ENCODE measurements at regions of chr17 and their contacts with region 1.

Region 1: DNA sequence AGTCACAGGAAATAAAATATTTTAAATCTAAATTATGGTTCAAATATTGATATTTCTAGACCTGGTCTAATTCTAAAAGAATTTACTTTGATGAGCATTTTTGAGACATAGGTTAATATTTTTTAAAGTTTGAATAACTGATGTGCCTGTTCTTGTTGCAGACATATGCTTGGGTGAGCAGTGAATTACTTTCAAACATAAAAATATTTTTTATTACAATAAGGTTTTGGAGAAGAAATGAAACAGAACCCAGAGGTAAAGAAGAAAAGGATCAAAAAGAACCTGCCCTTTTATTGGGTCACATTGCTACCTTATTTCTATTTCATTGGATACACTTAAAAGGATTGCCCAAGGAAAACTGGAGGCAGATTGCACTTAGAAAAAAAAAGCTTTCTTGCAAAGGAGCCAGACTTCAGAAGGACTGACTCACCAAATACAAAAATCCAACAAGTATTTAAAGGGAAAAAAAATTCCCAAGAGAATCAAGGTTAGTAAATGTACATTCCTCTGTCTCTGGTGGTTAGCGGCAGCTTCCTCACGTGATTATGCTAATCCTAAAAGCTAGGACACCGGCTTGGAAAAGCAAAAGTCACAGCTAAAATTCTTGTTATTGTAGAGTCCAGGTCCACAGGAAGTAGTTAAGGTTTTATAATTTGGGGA is 18.5 kb downstream of the ENPP7 start:
- DNase-seq: no peak
- ATAC-seq: no peak
- H3K4me3 ChIP-seq: no peak overlapping the region
- H3K4me3 Mint-ChIP-seq: no peak overlapping the region
- H3K27ac ChIP-seq: no peak overlapping the region
- H3K27ac Mint-ChIP-seq: no peak overlapping the region
- H3K4me1 ChIP-seq: peaks cover 28% of the 10 kb centered on the region
- H3K4me1 Mint-ChIP-seq: peaks cover 19% of the 10 kb centered on the region
- H3K27me3 ChIP-seq: peaks cover 44 to 54% of the 10 kb centered on the region in 2 experiments
- H3K27me3 Mint-ChIP-seq: peaks cover 69% of the 10 kb centered on the region
- CTCF ChIP-seq: no peak

Region 2: DNA sequence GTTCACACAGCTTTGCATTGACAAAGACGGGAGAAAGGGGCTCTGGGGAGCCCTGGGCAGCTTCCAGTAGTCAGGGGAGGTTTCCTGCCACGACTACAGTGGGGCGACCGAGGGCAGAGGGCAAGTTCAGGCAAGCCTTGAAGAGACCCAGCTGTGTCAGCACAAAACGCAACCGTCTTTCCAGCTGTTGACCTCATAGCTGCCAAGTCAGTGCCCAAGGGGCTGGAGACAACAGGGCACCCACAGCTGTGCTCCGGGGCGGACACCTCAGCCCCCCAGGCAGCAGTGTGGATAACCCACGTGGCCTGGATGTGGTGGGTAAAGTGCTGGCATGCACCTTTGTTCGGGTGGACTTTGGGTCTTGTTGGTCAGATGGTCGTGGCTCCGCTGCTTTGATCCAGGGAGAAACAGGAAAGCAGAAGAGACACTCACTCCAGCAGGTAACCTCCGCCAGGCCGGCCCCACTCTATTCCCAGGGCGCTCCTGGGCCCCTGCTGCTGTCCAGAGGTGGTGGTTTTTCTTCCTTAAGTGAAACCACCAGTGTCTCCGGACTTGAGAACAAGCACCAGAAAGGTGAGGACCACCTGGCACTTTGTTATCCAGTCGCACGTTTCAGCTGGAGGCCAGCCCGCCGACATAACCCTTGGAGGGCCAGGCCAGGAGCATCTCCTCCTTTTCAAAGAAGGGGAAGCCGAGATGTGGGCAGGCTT is 11.1 kb after region 1 on chr17:
- CTCF ChIA-PET with region 1: no interaction called
- POLR2A ChIA-PET with region 1: no interaction called
- intact Hi-C with region 1: no loop called
- DNase-seq: no peak
- ATAC-seq: no peak
- H3K4me3 ChIP-seq: no peak overlapping the region
- H3K4me3 Mint-ChIP-seq: no peak overlapping the region
- H3K27ac ChIP-seq: no peak overlapping the region
- H3K27ac Mint-ChIP-seq: no peak overlapping the region
- H3K4me1 ChIP-seq: no peaks in the 10 kb centered on the region
- H3K4me1 Mint-ChIP-seq: no peaks in the 10 kb centered on the region
- H3K27me3 ChIP-seq: peaks cover 3 to 4% of the 10 kb centered on the region in 2 experiments
- H3K27me3 Mint-ChIP-seq: peaks cover 22% of the 10 kb centered on the region
- CTCF ChIP-seq: no peak

Region 3: DNA sequence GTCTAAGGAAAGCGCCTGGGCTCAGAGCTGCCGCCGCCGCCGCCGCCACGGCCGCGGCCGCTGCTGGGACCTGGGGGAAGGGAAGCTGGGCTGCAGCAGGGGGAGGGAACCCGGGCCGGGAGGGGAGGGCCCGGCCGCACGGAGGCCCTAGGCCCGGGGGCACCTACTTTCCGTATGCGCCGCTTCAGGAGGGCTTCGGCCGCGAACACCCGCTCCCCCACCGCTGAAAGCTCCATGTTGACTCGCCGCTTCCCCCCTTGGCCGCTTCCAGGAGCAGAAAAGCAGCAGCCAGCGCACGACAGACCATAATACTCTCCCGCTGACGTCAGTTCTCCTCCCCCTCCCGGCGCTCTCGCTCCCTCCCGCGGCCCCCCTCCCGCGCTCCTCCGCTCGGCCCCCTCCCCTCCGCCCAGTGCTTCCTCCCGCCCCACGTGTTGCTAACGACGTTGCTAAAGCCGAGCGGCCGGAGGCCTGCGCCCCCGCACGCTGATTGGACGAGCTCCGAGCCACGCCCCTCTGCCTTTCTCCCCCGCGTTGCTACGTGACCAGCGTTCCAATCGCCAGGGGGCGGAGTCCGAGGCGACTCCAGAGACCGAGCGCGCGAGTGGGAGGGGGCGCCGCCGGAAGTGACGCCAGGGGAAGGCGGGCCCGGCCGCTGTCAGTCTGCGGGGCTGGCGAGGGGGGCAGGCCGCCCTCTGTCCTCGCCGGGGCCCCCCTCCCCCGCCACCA is 47.6 kb after region 1 on chr17 and contains the start of gene CBX8:
- CTCF ChIA-PET with region 1: interaction called, 6 read pairs
- POLR2A ChIA-PET with region 1: interaction called, 5 read pairs
- intact Hi-C with region 1: loop called in 1 of 2 experiments (anchors 5 kb)
- DNase-seq: peak; percentile 97 to 100 (median 99)
- ATAC-seq: peak; percentile 80
- H3K4me3 ChIP-seq: peak within 1 kb of the TSS; percentile 69
- H3K4me3 Mint-ChIP-seq: peak within 1 kb of the TSS; percentile 93
- H3K27ac ChIP-seq: peak within 1 kb of the TSS in 1 of 2 donors; percentile 7
- H3K27ac Mint-ChIP-seq: peak within 1 kb of the TSS; percentile 80
- H3K4me1 ChIP-seq: peaks cover 62% of the 10 kb centered on the region
- H3K4me1 Mint-ChIP-seq: peaks cover 49% of the 10 kb centered on the region
- H3K27me3 ChIP-seq: peaks cover 50 to 58% of the 10 kb centered on the region in 2 experiments
- H3K27me3 Mint-ChIP-seq: peaks cover 50% of the 10 kb centered on the region
- CTCF ChIP-seq: no peak
- total RNA-seq, gene CBX8: 5.3 to 6.5 TPM

Region 4: DNA sequence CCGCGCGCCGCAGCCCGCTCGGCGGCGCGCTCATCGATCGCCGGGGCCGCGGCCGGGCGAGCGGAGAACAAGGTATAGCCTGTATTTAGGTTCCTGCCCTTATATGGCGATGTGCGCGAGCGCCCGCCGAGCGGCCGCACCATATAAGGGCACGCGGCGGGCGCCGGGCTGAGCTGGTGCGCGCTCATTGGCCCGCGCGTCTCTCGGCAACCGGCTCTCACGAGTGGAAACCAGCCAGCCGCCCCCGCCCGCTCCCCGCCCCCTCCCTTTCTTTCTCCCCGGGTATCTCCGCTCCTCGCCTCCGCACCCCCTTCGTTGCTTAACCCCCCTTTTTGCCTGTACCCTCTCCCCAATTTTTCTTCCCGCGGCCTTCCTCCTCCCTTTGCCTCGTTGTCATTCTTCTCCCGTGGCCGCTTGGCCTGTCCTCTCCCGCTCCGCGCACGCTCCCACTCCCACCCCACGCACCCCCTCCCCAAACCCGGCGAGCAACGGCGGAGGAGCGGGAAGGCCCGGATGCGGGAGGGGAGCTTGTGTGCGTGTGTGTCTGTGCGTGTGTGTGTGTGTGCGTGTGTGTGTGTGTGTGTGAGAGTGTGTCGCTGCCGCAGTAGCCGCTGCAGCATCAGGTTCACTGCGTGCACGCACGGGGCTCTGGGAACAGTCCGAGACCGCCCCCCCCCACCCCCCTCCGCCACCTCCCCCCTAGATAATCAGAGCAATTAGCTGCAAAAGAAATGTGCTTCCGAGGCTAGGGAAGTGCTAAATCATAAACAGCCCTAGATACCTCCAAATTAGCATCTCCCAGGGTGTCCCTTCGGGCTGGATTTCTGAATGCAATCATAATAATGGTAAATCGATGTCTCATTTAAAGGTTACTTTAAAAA is 61.1 kb after region 1 on chr17:
- CTCF ChIA-PET with region 1: interaction called, 13 read pairs
- POLR2A ChIA-PET with region 1: interaction called, 6 read pairs
- intact Hi-C with region 1: loop called in 1 of 2 experiments (anchors 5 kb)
- DNase-seq: peak; percentile 48 to 93 (median 74)
- ATAC-seq: peak; percentile 92
- H3K4me3 ChIP-seq: no peak overlapping the region
- H3K4me3 Mint-ChIP-seq: peak overlapping the region; percentile 62
- H3K27ac ChIP-seq: no peak overlapping the region
- H3K27ac Mint-ChIP-seq: no peak overlapping the region
- H3K4me1 ChIP-seq: peaks cover 65% of the 10 kb centered on the region
- H3K4me1 Mint-ChIP-seq: peaks cover 36% of the 10 kb centered on the region
- H3K27me3 ChIP-seq: peaks cover 81 to 83% of the 10 kb centered on the region in 2 experiments
- H3K27me3 Mint-ChIP-seq: peaks cover 77% of the 10 kb centered on the region
- CTCF ChIP-seq: no peak

Region 5: GRCh38 chr17:79866791-79867518 is 117.7 kb after region 1 on chr17:
- CTCF ChIA-PET with region 1: no interaction called
- POLR2A ChIA-PET with region 1: no interaction called
- intact Hi-C with region 1: no loop called
- DNase-seq: peak in 3 of 14 experiments; percentile 23 to 47 (median 24)
- ATAC-seq: peak; percentile 52
- H3K4me3 ChIP-seq: no peak overlapping the region
- H3K4me3 Mint-ChIP-seq: no peak overlapping the region
- H3K27ac ChIP-seq: no peak overlapping the region
- H3K27ac Mint-ChIP-seq: peak overlapping the region; percentile 39
- H3K4me1 ChIP-seq: peaks cover 8% of the 10 kb centered on the region
- H3K4me1 Mint-ChIP-seq: no peaks in the 10 kb centered on the region
- H3K27me3 ChIP-seq: peaks cover under 1 to 3% of the 10 kb centered on the region in 2 experiments
- H3K27me3 Mint-ChIP-seq: peaks cover 22% of the 10 kb centered on the region
- CTCF ChIP-seq: no peak

Region 6: GRCh38 chr17:79915850-79916430 is 166.7 kb after region 1 on chr17:
- CTCF ChIA-PET with region 1: interaction called, 4 read pairs
- POLR2A ChIA-PET with region 1: no interaction called
- intact Hi-C with region 1: loop called (anchors 2 to 5 kb)
- DNase-seq: peak in 5 of 14 experiments; percentile 16 to 48 (median 41)
- ATAC-seq: no peak
- H3K4me3 ChIP-seq: no peak overlapping the region
- H3K4me3 Mint-ChIP-seq: no peak overlapping the region
- H3K27ac ChIP-seq: no peak overlapping the region
- H3K27ac Mint-ChIP-seq: no peak overlapping the region
- H3K4me1 ChIP-seq: no peaks in the 10 kb centered on the region
- H3K4me1 Mint-ChIP-seq: no peaks in the 10 kb centered on the region
- H3K27me3 ChIP-seq: no peaks in the 10 kb centered on the region
- H3K27me3 Mint-ChIP-seq: peaks cover 24% of the 10 kb centered on the region
- CTCF ChIP-seq: peak; percentile 14

Region 7: DNA sequence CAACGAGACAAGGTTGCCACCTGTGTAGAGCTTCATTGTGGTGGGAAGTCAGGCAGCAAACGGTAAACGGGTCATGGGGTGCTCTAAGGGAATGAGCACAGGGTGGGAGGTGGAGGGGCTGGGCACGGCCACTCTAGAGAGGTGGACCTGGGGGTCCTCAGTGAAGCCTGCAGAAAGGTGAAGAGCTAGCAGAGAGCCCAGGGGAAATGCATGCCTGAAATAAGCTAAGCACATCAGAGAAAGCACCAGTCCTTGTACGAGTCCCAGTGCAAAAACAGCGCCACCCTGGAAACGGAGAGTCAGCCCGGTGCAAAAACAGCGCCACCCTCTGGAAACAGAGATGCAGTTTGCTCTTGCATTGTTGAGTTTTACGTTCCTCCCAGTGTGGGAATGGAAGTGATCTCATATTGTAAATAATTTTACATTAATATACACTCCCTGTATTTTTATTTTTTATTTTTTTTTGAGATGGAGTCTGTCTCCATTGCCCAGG is 221.3 kb after region 1 on chr17:
- CTCF ChIA-PET with region 1: no interaction called
- POLR2A ChIA-PET with region 1: no interaction called
- intact Hi-C with region 1: loop called in 1 of 2 experiments (anchors 1 kb)
- DNase-seq: peak in 8 of 14 experiments; percentile 15 to 77 (median 32)
- ATAC-seq: no peak
- H3K4me3 ChIP-seq: no peak overlapping the region
- H3K4me3 Mint-ChIP-seq: no peak overlapping the region
- H3K27ac ChIP-seq: no peak overlapping the region
- H3K27ac Mint-ChIP-seq: no peak overlapping the region
- H3K4me1 ChIP-seq: peaks cover 4% of the 10 kb centered on the region
- H3K4me1 Mint-ChIP-seq: no peaks in the 10 kb centered on the region
- H3K27me3 ChIP-seq: no peaks in the 10 kb centered on the region
- H3K27me3 Mint-ChIP-seq: peaks cover 8% of the 10 kb centered on the region
- CTCF ChIP-seq: no peak

Region 8: GRCh38 chr17:79997011-79997660 is 247.8 kb after region 1 on chr17:
- CTCF ChIA-PET with region 1: interaction called, 5 read pairs
- POLR2A ChIA-PET with region 1: interaction called, 6 read pairs
- intact Hi-C with region 1: loop called in 1 of 2 experiments (anchors 2 kb)
- DNase-seq: peak; percentile 45 to 98 (median 66)
- ATAC-seq: peak; percentile 95
- H3K4me3 ChIP-seq: peak overlapping the region; percentile 41
- H3K4me3 Mint-ChIP-seq: peak overlapping the region; percentile 85
- H3K27ac ChIP-seq: peak overlapping the region; percentile 76 to 93
- H3K27ac Mint-ChIP-seq: peak overlapping the region; percentile 87
- H3K4me1 ChIP-seq: peaks cover 58% of the 10 kb centered on the region
- H3K4me1 Mint-ChIP-seq: peaks cover 51% of the 10 kb centered on the region
- H3K27me3 ChIP-seq: no peaks in the 10 kb centered on the region
- H3K27me3 Mint-ChIP-seq: no peaks in the 10 kb centered on the region
- CTCF ChIP-seq: no peak